ENCODE measurements at regions of chr20 and their contacts with region 1.

Region 1: DNA sequence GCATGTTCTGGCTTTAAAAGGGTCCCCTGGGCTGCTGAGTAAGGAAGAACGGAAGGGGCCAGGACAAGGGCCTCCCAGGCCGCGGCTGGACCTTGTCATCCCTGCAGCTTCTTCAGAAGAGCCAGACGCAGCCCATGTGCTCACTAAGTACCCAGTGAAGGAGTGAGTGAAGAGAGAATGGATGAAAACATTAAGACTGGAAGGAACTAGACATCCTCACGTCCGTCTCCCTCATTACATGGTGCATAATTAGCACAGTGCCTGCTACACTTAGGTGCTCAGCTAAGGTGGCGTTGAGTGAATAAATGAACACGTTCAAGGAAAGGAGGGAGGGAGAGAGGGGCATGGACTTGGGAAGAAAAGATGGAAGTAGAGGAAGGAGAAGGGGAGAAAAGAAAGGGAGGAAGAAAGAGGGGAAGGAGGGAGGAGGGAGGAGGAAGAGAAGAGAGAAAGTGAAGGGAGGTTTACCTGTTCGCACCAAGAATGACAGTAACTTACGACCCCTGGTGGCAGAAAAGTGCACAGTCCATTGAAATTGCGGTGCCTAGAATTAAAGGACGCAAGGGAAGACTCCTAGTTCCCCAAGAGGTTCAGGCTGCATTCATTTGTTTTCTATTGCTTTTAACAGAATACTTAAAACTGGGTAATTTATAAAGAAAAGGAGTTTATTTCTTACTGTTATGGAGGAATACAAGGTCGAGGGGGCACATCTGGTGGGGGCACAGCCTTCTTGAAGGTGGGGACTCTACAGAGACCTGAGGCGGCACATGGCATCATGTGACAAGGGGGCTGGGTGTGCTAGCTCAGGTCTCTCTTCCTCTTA is 8.0 kb downstream of the TP53RK start:
- DNase-seq: peak in 8 of 10 donors; percentile 30 to 91 (median 76)

Region 2: DNA sequence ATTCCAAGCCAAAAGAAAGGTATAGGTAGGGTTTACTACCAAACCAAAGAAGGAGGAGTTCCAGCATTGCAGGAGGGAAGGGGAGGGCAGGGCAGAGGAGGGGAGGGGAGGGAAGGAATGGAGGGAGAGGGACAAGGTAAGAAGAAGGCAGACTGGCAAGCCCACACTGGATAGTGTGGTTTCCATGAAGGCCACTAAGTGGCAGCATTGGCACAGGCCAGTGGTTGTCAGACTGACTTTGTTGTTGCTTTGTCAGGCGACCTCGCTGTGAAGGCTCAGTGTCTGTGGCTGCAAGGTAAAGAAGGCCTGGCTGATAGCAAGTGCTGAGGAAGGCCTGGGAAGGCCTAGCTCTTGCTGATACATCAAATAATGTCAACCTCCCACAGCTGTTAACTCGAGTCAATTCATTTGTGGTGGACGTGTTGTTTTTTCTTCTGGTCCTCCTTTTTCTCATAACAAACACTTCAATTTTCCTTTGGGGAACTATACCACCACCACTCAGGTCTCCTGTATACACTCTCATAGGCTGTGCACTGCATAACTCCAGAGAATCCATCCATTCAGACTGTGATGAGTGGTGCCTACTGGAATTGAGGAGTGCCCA is 160.2 kb before region 1 on chr20:
- intact Hi-C with region 1: loop called (anchors 5 kb)
- DNase-seq: peak; percentile 34 to 94 (median 64)

Region 3: DNA sequence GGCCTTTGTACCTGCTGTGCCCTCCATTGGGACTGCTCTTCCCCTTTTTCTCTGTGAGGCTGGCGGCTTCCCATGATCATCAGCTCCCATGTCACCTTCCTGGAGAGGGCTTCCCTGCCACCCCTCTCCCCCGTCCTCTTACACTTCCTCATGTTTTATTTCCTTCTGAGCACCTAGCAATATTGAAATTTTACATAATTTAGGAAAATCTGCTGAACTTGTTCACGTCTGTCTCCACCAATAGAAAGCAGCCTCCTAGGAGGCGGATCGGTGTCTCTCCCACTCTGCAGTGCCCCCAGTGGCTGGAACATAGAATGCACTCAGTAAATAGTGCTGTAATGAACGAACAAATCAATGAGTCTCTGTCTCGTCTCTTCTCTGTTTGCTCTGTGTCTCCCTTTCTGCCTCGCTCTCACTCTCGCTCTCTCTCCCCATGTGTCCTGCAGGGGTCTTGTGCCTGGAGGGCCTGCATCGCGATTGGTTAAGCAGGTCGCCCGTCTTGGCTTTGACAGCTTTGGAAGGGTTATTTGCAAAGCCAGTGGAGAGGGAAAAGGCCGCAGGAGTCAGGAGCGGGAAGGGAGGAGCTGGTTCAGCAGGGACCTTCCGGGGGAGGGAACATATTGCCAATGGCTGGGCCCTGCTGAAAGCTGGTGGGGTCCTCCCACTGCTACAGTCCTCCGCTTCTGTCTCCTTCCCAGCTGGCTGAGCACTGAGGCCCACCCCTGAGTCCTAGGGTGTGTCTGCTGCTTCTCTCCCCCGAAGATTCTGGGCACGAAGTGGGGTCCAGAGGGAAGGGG is 118.7 kb before region 1 on chr20:
- intact Hi-C with region 1: loop called (anchors 2 kb)
- DNase-seq: peak; percentile 45 to 96 (median 79)

Region 4: GRCh38 chr20:46592580-46593362 is 88.5 kb before region 1 on chr20:
- intact Hi-C with region 1: no loop called
- DNase-seq: no peak

Region 5: DNA sequence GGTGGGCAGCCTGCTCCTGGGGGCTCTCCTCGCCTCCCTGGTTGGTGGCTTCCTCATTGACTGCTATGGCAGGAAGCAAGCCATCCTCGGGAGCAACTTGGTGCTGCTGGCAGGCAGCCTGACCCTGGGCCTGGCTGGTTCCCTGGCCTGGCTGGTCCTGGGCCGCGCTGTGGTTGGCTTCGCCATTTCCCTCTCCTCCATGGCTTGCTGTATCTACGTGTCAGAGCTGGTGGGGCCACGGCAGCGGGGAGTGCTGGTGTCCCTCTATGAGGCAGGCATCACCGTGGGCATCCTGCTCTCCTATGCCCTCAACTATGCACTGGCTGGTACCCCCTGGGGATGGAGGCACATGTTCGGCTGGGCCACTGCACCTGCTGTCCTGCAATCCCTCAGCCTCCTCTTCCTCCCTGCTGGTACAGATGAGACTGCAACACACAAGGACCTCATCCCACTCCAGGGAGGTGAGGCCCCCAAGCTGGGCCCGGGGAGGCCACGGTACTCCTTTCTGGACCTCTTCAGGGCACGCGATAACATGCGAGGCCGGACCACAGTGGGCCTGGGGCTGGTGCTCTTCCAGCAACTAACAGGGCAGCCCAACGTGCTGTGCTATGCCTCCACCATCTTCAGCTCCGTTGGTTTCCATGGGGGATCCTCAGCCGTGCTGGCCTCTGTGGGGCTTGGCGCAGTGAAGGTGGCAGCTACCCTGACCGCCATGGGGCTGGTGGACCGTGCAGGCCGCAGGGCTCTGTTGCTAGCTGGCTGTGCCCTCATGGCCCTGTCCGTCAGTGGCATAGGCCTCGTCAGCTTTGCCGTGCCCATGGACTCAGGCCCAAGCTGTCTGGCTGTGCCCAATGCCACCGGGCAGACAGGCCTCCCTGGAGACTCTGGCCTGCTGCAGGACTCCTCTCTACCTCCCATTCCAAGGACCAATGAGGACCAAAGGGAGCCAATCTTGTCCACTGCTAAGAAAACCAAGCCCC is 44.2 kb after region 1 on chr20:
- intact Hi-C with region 1: no loop called
- DNase-seq: no peak